ENCODE measurements at regions of chr10 and their contacts with region 1.

Region 1: DNA sequence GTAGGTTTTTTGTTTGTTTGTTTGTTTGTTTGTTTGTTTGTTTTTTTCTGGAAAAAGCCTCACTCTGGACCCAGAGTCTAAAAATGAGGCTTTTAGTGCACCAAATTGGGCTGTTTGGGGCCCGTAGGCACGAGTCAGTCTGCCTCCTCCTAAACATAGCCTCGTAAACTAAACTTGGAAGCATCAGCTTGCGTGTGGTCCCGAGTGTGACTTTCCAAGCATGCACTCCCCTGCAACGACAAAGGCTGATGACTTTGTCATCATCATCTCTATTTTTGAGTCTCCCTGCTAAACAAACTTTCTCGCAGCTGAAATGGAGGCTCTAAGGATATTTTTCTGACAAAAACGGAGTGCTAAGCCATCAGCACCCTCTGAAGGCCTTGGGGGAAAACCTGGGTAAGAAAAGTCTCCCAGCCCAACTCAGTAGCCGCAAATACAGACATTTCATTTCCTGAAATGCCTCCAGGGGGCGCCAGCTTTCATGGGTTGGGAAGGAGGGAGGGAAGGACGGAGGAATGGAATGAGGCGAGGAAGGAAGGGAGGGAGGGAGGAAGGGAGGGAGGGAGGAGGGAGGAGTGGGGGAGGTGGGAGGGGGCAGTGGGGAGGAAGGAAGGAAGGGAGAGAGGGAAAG is 245.9 kb downstream of the KCNMA1 start:
- DNase-seq: peak; percentile 87
- ATAC-seq: peak; percentile 61
- H3K4me3 ChIP-seq: no peak overlapping the region
- H3K27ac ChIP-seq: peak overlapping the region; percentile 64
- H3K4me1 ChIP-seq: peaks cover 26% of the 10 kb centered on the region
- H3K27me3 ChIP-seq: no peaks in the 10 kb centered on the region
- CTCF ChIP-seq: peak; percentile 77
- POLR2A ChIP-seq: no peak
- RAD21 ChIP-seq: peak; percentile 77

Region 2: GRCh38 chr10:77173615-77174461 is 217.9 kb before region 1 on chr10:
- CTCF ChIA-PET with region 1: interaction called, 3 read pairs
- POLR2A ChIA-PET with region 1: no interaction called
- dilution Hi-C with region 1: no loop called
- in situ Hi-C with region 1: loop called (anchors 10 kb)
- intact Hi-C with region 1: loop called (anchors 2 kb)
- DNase-seq: peak; percentile 79
- ATAC-seq: peak; percentile 93
- H3K4me3 ChIP-seq: no peak overlapping the region
- H3K27ac ChIP-seq: no peak overlapping the region
- H3K4me1 ChIP-seq: no peaks in the 10 kb centered on the region; the same call in 1 of the 2 replicates
- H3K27me3 ChIP-seq: no peaks in the 10 kb centered on the region
- CTCF ChIP-seq: peak; percentile 96
- POLR2A ChIP-seq: 0 out of 2 replicates have a peak, but pooled peaks have one; percentile 36
- RAD21 ChIP-seq: peak; percentile 96

Region 3: DNA sequence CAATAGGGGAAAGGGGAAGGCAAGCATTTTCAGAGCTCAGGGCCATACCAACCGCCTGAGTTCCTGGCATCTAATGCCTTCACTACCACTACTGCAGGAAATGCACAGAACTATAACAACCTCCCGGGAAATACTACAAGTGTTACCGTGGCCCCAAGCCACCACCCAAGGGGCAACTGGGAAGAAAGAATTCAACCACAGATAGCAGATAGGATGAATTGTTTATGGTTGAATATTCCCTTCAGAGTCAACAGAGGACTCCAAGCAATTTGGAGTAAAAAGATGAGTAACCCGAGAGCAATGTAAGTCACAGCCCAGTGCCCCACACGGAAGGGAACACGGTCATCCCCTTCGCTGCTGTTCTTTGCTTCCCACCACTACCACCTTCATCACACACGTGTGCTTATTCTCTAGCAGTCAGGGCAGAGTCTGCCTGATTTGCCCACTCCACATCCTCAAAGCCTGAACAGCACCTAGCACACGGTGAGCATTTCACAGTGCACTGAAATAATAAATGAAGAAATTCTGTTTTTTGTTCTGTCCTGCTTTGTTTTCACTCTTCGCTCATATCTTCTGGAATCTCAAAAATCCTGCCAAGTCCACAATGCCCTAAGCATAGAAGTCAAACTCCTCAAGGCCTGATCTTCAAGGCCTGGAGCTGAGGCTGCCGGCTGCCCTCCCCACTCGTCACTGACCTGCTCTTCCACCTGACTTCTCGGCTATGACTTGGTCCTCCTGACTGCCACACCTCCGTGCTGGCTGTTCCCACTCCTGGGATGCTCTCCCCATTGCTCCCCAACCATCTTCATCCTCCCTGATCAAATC is 24.8 kb after region 1 on chr10:
- CTCF ChIA-PET with region 1: no interaction called
- POLR2A ChIA-PET with region 1: no interaction called
- dilution Hi-C with region 1: no loop called
- in situ Hi-C with region 1: no loop called
- intact Hi-C with region 1: loop called (anchors 1 kb)
- DNase-seq: peak; percentile 88
- ATAC-seq: peak; percentile 90
- H3K4me3 ChIP-seq: no peak overlapping the region
- H3K27ac ChIP-seq: peak overlapping the region; percentile 85
- H3K4me1 ChIP-seq: peaks cover 23% of the 10 kb centered on the region
- H3K27me3 ChIP-seq: no peaks in the 10 kb centered on the region
- CTCF ChIP-seq: no peak
- POLR2A ChIP-seq: no peak; the same call in 1 of the 2 replicates
- RAD21 ChIP-seq: peak; percentile 14

Region 4: GRCh38 chr10:77603534-77603927 is 211.8 kb after region 1 on chr10:
- CTCF ChIA-PET with region 1: interaction called, 3 read pairs
- POLR2A ChIA-PET with region 1: no interaction called
- dilution Hi-C with region 1: no loop called
- in situ Hi-C with region 1: no loop called
- intact Hi-C with region 1: loop called (anchors 10 kb)
- DNase-seq: peak; percentile 44
- ATAC-seq: peak; percentile 9
- H3K4me3 ChIP-seq: no peak overlapping the region
- H3K27ac ChIP-seq: no peak overlapping the region
- H3K4me1 ChIP-seq: peaks cover 27% of the 10 kb centered on the region
- H3K27me3 ChIP-seq: no peaks in the 10 kb centered on the region
- CTCF ChIP-seq: no peak
- POLR2A ChIP-seq: no peak
- RAD21 ChIP-seq: no peak

Region 5: DNA sequence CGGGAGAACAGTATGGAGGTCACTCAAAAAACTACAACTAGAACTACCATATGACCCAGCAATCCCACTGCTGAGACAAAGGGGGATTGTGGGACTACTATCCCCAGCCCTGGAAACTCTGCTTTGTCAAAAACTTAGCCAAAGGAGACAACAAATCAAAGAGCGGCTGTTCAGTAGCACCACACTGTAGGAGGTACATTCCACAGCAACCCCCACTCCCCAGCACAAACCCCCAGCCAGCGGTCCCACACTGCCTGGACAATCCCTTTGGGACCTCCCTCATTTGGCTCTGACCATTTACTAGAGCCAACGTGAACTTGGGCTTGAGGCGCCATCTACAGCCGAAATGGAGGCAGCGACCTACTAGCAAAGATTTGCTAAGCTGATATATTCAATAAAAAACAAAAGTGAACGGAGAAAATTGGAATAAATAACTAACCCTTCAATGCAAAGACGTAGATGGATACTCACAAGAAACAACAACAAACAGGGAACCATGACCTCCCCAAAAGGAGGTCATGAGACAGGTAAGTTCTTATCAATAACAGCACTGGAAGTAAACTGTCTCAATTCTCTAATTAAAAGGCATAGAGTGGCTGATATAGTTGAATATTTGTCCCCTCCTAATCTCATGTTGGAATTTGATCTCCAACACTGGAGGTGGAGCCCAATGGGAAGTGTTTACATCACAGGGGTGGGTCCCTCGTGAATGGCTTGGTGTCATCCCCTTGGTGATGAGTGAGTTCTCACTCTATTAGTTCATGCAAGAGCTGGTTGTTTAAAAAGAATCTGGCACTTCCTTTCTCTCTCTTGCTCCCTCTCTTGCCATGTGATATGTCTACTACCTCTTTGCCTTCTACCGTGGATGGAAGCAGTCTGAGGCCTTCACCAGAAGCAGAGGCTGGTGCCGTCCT is 364.9 kb after region 1 on chr10:
- CTCF ChIA-PET with region 1: no interaction called
- POLR2A ChIA-PET with region 1: no interaction called
- dilution Hi-C with region 1: no loop called
- in situ Hi-C with region 1: no loop called
- intact Hi-C with region 1: loop called (anchors 5 kb)
- DNase-seq: peak; percentile 74
- ATAC-seq: peak; percentile 97
- H3K4me3 ChIP-seq: no peak overlapping the region
- H3K27ac ChIP-seq: no peak overlapping the region
- H3K4me1 ChIP-seq: no peaks in the 10 kb centered on the region
- H3K27me3 ChIP-seq: no peaks in the 10 kb centered on the region
- CTCF ChIP-seq: peak; percentile 93
- POLR2A ChIP-seq: 0 out of 2 replicates have a peak, but pooled peaks have one; percentile 35
- RAD21 ChIP-seq: peak; percentile 93